Activated B cell treated with CpG ODN at 0.5 μM for 24 hours (primary cell): ENCODE measurements at regions of chr13 and their contacts with region 1.

Region 1: GRCh38 chr13:97109841-97110492 is 112.2 kb upstream of the MBNL2 start:
- DNase-seq: peak; percentile 74
- ATAC-seq: peak; percentile 95
- H3K4me3 Mint-ChIP-seq: peak overlapping the region; percentile 24
- H3K27ac Mint-ChIP-seq: no peak overlapping the region
- H3K4me1 Mint-ChIP-seq: peaks cover 3% of the 10 kb centered on the region
- H3K27me3 Mint-ChIP-seq: peaks cover 20% of the 10 kb centered on the region
- CTCF ChIP-seq: peak; percentile 67

Region 2: DNA sequence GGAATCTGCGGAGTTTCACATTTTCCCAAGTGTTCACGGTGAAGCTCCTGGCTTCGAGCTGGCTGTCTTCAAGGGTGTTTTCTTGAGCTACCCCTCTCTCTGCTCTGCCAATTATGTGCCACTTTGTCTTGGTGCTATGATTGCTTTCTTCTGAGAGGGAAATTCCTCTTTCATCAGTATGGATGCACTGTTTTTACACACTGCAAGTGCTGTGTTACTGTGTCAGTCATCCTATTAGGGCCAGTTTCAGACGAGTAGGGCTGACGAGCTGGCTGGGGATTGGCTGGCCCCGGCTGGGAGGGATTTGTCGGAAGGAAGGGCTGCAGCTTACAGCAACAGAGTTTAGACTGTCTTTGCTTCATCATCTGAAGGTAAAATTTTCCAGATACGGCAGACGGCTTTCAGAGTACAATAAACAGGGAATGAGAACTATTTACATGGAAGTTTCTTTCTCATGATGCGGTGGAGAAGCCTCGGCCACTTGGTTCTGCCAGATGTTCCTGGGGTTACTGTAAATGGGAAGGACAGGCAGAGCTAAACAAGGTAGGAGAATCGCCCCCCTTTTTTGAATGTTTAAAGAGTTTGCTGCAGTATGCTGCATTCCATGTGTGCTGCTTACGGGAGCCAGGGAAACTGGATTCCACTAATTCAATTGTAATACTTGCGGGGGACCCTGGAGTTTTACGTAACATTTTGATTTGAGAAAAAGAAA is 112.2 kb after region 1 on chr13 and contains the start of gene MBNL2:
- CTCF ChIA-PET with region 1: interaction called, 8 read pairs
- POLR2A ChIA-PET with region 1: no interaction called
- intact Hi-C with region 1: loop called (anchors 2 kb)
- DNase-seq: peak; percentile 67
- ATAC-seq: peak; percentile 98
- H3K4me3 Mint-ChIP-seq: peak within 1 kb of the TSS; percentile 89
- H3K27ac Mint-ChIP-seq: peak within 1 kb of the TSS; percentile 92
- H3K4me1 Mint-ChIP-seq: peaks cover 51% of the 10 kb centered on the region
- H3K27me3 Mint-ChIP-seq: no peaks in the 10 kb centered on the region
- CTCF ChIP-seq: no peak
- total RNA-seq, gene MBNL2: 15.3 and 18.8 TPM in 2 replicates

Region 3: GRCh38 chr13:97257800-97258799 is 148.1 kb after region 1 on chr13:
- CTCF ChIA-PET with region 1: no interaction called
- POLR2A ChIA-PET with region 1: no interaction called
- intact Hi-C with region 1: no loop called
- DNase-seq: no peak
- ATAC-seq: peak; percentile 18
- H3K4me3 Mint-ChIP-seq: no peak overlapping the region
- H3K27ac Mint-ChIP-seq: no peak overlapping the region
- H3K4me1 Mint-ChIP-seq: peaks cover 69% of the 10 kb centered on the region
- H3K27me3 Mint-ChIP-seq: no peaks in the 10 kb centered on the region
- CTCF ChIP-seq: no peak

Region 4: DNA sequence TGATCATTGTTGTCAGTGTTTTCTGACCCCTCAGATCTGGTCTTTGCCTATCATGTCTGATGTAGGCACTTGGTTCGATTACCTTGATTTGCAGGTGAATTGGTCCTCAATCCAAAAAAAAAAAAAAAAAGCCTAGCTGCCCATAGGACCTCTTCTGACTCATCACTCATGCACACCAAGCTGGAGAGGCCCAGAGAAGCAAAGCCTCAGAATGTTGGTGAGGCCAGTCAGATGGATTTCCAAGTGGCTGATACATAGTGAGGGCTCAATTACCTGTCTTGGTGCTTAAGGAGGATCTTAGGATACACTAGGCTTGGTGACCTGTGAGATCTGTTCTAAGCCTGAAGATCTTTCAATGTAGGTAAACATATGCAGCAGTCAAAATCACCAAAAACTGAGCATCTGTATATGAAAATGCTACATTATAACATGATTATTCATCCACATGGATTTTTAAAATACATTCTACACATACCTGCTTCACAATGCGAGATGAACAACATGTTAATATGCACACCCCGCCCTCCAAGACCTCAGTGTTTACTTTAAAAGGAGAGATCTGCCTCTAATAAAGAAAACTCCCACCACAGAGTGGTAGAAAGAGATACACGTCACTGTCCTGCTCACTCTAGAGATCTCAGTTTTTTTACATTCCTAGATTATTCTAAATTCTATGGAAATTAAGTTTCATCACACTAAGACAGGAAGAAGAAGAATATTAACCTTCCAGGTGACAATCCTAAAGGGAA is 244.1 kb after region 1 on chr13:
- CTCF ChIA-PET with region 1: interaction called, 183 read pairs
- POLR2A ChIA-PET with region 1: interaction called, 5 read pairs
- intact Hi-C with region 1: loop called (anchors 1 kb)
- DNase-seq: no peak
- ATAC-seq: no peak
- H3K4me3 Mint-ChIP-seq: no peak overlapping the region
- H3K27ac Mint-ChIP-seq: no peak overlapping the region
- H3K4me1 Mint-ChIP-seq: no peaks in the 10 kb centered on the region
- H3K27me3 Mint-ChIP-seq: no peaks in the 10 kb centered on the region
- CTCF ChIP-seq: no peak

Region 5: DNA sequence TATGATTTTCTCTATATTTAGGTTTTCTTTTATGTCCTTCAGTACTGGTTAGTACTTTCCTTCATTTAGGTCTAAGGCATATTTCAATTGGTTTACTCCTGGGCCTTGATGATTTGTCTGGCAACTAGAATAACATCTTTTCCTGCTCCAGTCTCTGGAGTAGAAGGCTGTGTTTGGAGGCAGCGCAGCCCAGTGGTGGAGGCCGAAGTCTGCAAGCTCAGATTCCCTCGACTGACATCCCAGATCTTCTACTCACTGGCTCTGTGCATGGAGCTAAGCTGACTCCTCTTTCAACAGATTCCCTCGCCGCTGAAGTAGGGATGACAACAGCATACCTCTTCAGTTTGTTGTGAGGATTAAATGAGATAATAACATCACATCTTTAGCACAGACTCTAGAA is 465.0 kb after region 1 on chr13:
- CTCF ChIA-PET with region 1: interaction called, 6 read pairs
- POLR2A ChIA-PET with region 1: no interaction called
- intact Hi-C with region 1: loop called (anchors 1 kb)
- DNase-seq: no peak
- ATAC-seq: no peak
- H3K4me3 Mint-ChIP-seq: no peak overlapping the region
- H3K27ac Mint-ChIP-seq: no peak overlapping the region
- H3K4me1 Mint-ChIP-seq: no peaks in the 10 kb centered on the region
- H3K27me3 Mint-ChIP-seq: no peaks in the 10 kb centered on the region
- CTCF ChIP-seq: no peak

Region 6: DNA sequence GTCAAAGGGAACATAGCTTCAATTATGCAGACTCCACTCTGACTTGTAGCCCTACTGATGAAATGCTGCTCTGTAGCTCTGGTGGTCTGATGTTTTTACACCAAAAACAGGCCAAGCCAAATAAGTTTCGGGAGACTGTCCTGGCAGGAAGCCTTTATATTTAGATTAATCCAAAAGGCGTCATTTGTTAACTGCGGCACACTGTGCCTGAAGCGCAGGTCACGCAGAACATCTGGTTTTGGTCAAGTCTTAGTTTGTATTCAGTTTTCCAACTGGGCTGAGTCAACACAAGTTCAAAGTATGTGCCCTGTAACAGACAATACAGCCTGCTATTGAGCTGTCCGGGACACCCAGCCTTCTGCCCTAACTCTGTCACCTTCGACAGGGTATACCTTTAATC is 688.9 kb after region 1 on chr13:
- CTCF ChIA-PET with region 1: interaction called, 8 read pairs
- POLR2A ChIA-PET with region 1: no interaction called
- intact Hi-C with region 1: loop called (anchors 1 kb)
- DNase-seq: no peak
- ATAC-seq: no peak
- H3K4me3 Mint-ChIP-seq: no peak overlapping the region
- H3K27ac Mint-ChIP-seq: no peak overlapping the region
- H3K4me1 Mint-ChIP-seq: no peaks in the 10 kb centered on the region
- H3K27me3 Mint-ChIP-seq: peaks cover 2% of the 10 kb centered on the region
- CTCF ChIP-seq: no peak